ENCODE measurements at regions of chr10 and their contacts with region 1.

Region 1: GRCh38 chr10:87861953-87862678 is 1.2 kb downstream of the KLLN start:
- DNase-seq: peak; percentile 95
- H3K4me3 Mint-ChIP-seq: peak overlapping the region; percentile 96
- H3K27ac Mint-ChIP-seq: peak overlapping the region; percentile 95
- H3K4me1 Mint-ChIP-seq: peaks cover 33% of the 10 kb centered on the region
- H3K27me3 Mint-ChIP-seq: peaks cover 3% of the 10 kb centered on the region

Region 2: DNA sequence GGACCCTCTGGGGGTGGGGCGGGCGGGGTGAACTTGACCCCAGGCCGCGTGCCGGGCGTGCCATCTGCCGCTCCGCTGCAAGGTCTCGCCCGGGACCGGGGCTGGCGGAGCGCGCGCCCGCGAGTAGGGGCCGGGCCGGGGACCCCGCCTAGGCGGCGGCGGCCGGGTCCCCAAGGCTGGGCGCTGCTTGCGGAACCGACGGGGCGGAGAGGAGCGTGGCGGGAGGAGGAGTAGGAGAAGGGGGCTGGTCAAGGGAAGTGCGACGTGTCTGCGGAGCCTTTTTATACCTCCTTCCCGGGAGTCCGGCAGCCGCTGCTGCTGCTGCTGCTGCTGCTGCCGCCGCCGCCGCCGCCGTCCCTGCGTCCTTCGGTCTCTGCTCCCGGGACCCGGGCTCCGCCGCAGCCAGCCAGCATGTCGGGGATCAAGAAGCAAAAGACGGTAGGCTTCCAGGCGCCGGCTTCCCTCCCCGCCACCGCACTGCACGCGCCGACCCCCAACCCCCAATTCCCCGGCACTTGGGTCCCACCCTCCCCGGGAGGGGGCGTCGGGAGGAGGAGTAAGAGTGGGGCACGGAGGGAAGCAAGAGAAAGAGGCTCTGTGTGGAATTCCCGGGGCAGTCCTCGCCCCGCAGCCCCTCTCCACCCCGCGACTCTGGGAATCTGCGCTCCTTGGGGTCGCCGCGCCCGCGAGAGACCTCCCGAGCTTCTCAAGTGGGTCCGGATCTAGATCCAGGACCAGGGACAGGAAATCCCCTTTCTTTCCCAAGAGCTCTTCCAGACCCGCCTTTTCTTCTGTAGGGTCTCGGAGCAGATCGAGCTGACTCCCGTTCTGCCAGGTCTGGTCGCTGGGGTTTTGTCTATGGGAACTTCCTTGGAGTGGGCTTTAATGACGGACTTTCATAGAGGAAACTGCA is 202.3 kb before region 1 on chr10 and contains the start of gene PAPSS2:
- CTCF ChIA-PET with region 1: no interaction called
- intact Hi-C with region 1: loop called (anchors 5 kb)
- DNase-seq: peak; percentile 27
- H3K4me3 Mint-ChIP-seq: peak within 1 kb of the TSS; percentile 74
- H3K27ac Mint-ChIP-seq: no peak within 1 kb of the TSS
- H3K4me1 Mint-ChIP-seq: peaks cover 10% of the 10 kb centered on the region
- H3K27me3 Mint-ChIP-seq: peaks cover 48% of the 10 kb centered on the region
- total RNA-seq, gene PAPSS2: 0.38 TPM in 1 of 2 experiments, not detected in the other

Region 3: GRCh38 chr10:87838650-87839049 is 23.5 kb before region 1 on chr10:
- CTCF ChIA-PET with region 1: no interaction called
- intact Hi-C with region 1: no loop called
- DNase-seq: no peak
- H3K4me3 Mint-ChIP-seq: no peak overlapping the region
- H3K27ac Mint-ChIP-seq: no peak overlapping the region
- H3K4me1 Mint-ChIP-seq: peaks cover 4% of the 10 kb centered on the region
- H3K27me3 Mint-ChIP-seq: no peaks in the 10 kb centered on the region

Region 4: DNA sequence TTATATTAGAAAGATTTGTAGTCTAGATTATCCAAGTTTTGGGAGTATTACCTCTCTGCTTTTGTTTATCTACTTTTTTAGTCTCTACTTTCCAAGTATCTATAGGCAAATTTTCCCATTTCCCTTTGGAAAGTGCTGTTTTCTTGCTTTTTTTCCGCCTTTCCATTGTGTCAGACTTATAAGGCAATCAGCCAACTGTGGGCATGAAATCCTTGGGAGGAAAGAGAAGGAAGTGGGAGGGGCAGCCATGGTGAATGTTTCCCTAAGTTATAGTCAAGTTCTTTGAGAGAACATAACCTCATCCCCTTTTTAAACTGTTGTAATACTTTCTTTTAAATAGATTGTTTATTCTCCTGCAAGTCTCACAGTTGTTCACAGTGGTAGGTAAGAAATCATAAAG is 53.9 kb after region 1 on chr10:
- CTCF ChIA-PET with region 1: no interaction called
- intact Hi-C with region 1: loop called (anchors 2 kb)
- DNase-seq: no peak
- H3K4me3 Mint-ChIP-seq: no peak overlapping the region
- H3K27ac Mint-ChIP-seq: no peak overlapping the region
- H3K4me1 Mint-ChIP-seq: peaks cover 40% of the 10 kb centered on the region
- H3K27me3 Mint-ChIP-seq: no peaks in the 10 kb centered on the region

Region 5: DNA sequence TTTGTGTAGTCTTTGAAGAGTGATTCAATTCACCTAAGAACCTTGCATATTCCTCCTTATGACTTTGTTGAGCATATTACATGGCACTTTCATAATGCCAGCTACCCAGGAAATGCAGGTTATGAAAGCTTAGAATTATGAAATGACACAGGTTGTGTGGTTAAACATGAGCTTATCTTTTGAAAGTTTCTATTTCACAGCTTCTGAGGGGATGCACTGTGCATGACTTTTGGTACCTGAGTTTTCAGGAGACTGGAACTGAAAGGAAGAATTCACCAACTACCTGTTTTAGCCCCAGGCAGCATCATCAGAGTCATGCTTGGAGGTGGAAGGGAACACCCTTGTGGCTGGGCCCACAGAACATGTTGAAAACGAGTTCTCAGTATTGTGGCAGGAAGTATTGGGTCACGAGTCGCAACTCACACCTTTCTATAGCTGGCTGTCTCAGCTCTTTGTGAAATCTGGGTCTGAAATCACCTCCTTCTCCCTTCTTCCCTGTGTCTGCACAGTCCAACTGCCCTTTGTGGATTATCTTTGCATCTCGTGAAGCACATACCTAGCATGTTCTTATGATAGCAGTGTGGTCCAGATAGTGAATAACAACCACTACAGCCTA is 229.5 kb after region 1 on chr10:
- CTCF ChIA-PET with region 1: interaction called, 6 read pairs
- intact Hi-C with region 1: loop called (anchors 1 kb)
- DNase-seq: peak; percentile 91
- H3K4me3 Mint-ChIP-seq: no peak overlapping the region
- H3K27ac Mint-ChIP-seq: no peak overlapping the region
- H3K4me1 Mint-ChIP-seq: peaks cover 34% of the 10 kb centered on the region
- H3K27me3 Mint-ChIP-seq: peaks cover 19% of the 10 kb centered on the region

Region 6: DNA sequence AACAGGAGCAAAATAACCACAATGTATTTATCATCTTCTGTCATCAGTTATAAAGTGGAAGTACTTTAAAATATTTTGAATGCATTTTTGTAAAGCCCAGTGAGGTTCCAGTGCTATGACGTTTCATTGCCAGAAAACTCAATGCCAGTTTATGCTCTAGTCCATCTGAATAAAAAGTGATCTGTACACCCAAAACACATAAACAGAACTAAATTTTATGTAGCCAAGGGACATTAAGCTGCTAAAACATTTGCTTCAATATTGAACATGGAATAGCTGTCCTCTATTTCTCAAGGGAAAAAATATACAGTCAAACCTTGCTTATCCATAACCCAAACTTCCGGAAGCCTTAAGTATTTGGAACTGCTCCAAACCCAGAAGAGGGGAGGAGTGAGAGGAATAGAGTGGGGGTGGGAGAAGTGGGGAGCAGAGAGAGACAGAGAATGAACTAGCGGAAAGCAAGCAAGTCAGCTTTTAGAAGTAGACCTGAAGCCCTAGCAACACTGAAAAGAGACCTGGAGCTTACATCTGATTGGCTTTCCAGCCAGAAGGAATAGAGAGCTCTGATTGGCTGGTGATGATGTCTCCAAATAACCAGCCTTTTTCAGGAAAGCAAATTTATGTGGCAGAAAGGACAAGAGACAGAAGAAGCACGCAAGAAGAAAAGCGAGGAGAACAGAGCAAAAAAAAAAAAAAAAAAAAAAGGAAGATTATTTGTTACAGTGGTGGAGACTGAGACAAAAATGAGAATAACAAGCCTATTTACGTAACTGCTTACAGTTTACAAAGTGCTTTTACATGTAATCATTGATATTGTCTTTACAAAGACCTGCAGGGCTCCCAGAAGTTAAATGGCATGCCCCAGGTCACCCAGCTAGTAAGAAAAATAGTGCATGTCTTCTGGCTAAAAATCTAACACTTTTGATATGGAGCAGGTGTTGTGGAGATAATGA is 525.0 kb after region 1 on chr10:
- CTCF ChIA-PET with region 1: interaction called, 14 read pairs
- intact Hi-C with region 1: loop called (anchors 1 kb)
- DNase-seq: peak; percentile 7
- H3K4me3 Mint-ChIP-seq: no peak overlapping the region
- H3K27ac Mint-ChIP-seq: no peak overlapping the region
- H3K4me1 Mint-ChIP-seq: peaks cover 25% of the 10 kb centered on the region
- H3K27me3 Mint-ChIP-seq: no peaks in the 10 kb centered on the region

Region 7: DNA sequence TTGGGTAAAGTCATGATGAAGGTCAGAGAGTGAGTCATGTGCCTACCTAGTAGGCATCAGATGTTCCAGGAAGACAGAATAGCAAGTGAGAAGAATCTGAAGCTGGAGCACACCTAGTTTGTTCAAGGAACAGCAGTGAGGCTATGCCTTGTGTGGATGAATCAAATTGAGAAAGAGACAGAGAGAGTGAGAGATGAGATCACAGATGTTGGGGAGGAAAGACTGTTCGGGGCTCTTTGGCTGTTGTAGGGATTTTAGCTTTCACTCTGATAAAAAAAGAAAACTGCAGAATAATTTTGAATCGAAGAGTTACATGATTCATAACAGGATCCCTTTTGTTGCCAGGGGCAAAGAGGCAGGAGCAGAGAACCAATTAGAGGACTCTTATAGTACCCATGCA is 808.4 kb after region 1 on chr10:
- CTCF ChIA-PET with region 1: no interaction called
- intact Hi-C with region 1: loop called (anchors 5 kb)
- DNase-seq: peak; percentile 44
- H3K4me3 Mint-ChIP-seq: no peak overlapping the region
- H3K27ac Mint-ChIP-seq: peak overlapping the region; percentile 33
- H3K4me1 Mint-ChIP-seq: peaks cover 24% of the 10 kb centered on the region
- H3K27me3 Mint-ChIP-seq: peaks cover 7% of the 10 kb centered on the region

Measured in activated naive CD4-positive, alpha-beta T cell treated with anti-CD3 and anti-CD28 coated beads for 36 hours (primary cell).